Dorsolateral prefrontal cortex (tissue), 120 donors: ENCODE measurements at regions of chr6 and their contacts with region 1.

Region 1: DNA sequence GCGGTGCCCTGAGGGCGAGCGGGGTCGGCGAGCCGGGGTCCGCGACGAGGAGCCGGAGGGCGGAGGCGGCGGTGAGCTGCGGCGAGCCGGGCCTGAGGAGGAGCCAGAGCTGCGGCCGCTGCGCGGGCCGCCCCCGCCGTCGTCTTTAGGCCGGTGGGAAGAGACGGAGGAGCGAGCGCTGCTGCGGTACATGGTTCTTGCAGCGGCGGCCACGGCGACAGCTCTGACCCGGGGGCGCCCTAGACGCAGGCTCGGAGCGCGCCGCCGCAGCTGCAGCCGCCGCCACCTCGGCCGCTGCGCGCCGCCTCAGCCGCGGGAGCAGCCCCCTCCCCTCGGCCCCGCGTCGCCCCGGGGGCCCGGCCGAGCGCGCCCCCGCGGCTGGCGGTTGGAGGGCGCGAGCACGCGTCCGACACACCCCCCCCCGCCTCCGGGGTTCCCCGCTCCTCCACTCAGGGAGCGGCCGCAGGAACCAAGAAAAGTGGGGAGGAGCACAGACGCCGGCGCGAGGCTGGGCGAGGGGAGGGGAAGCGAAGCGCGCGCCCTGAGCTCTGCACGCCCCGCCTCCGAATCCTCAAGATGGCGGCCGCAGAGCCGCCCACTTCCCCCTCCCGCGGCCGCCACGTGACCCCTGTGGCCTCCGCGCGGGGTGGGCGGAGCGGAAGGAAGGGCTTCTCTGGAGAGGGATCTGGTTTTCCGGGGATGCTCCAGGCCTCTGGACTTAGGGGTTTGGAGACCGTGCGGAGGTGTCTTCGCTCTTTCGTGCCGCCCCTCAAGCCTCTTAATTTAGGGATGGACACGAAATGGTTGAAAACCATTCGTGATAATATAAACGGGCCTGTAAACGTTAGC is at the start of gene ZNF318:
- DNase-seq: peak; percentile 91 to 98 (median 96)
- H3K4me3 ChIP-seq: peak within 1 kb of the TSS; percentile 59 to 92 (median 81)
- H3K27ac ChIP-seq: peak within 1 kb of the TSS; percentile 62 to 98 (median 93)
- H3K27me3 ChIP-seq: no peaks in the 10 kb centered on the region
- CTCF ChIP-seq: peak in 17 of 56 donors; percentile 12 to 50 (median 25)
- total RNA-seq, gene ZNF318: 27.9 to 56.2 (median 41.8) TPM

Region 2: GRCh38 chr6:42928986-42929820 is 440.2 kb before region 1 on chr6 and contains the start of gene CNPY3:
- intact Hi-C with region 1: no loop called
- DNase-seq: peak; percentile 79 to 96 (median 94)
- H3K4me3 ChIP-seq: peak within 1 kb of the TSS; percentile 65 to 98 (median 85)
- H3K27ac ChIP-seq: peak within 1 kb of the TSS; percentile 61 to 98 (median 93)
- H3K27me3 ChIP-seq: no peaks in the 10 kb centered on the region
- CTCF ChIP-seq: peak in 19 of 56 donors; percentile 6 to 52 (median 21)
- total RNA-seq, gene CNPY3: 33.3 to 56.8 (median 43.9) TPM

Region 3: DNA sequence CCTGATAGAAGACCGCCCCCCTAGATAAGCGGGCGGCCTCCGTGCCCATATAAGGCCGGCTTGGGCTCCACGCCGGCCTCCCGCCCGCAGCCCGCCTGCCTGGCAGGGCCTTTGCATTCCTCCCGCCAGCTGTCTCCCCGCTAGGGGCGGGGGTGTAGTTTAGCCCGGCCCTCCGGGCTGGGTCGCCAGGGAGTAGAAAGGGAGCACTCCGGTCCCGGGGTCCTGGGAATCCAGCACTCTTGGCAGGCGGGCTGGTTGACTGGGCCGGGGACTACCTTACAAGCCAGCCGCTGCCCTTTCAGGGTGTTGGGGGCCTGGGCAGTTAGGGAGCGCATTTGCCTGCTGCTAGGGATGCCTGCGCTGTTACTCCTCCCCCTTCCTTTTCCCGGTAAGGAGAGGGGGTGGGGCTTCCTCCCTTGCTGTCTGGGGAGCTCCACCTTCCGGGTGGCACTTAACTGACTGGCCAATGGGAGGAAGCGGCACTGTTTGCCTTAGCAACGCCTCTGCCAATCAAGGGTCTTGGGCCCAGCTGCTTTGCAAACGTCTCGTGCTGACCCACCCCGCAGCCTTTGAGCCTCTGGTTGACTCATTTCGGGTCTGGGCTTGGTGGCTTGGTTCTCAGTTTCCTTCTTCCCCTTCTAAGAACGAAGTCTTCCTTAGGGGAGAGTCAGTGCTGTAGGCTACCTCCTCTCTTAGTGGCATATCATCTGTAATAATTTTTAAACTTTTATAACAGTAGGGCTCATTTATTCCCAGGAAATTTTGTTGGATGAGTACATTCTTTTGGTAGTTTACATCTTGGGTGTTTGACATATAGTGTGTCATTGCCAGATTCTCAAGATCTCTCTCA is 194.9 kb before region 1 on chr6:
- intact Hi-C with region 1: loop called (anchors 2 to 5 kb)
- DNase-seq: peak; percentile 88 to 99 (median 98)
- H3K4me3 ChIP-seq: peak overlapping the region; percentile 29 to 98 (median 81)
- H3K27ac ChIP-seq: peak overlapping the region; percentile 50 to 98 (median 90)
- H3K27me3 ChIP-seq: no peaks in the 10 kb centered on the region
- CTCF ChIP-seq: peak in 50 of 56 donors; percentile 8 to 67 (median 42)

Region 4: DNA sequence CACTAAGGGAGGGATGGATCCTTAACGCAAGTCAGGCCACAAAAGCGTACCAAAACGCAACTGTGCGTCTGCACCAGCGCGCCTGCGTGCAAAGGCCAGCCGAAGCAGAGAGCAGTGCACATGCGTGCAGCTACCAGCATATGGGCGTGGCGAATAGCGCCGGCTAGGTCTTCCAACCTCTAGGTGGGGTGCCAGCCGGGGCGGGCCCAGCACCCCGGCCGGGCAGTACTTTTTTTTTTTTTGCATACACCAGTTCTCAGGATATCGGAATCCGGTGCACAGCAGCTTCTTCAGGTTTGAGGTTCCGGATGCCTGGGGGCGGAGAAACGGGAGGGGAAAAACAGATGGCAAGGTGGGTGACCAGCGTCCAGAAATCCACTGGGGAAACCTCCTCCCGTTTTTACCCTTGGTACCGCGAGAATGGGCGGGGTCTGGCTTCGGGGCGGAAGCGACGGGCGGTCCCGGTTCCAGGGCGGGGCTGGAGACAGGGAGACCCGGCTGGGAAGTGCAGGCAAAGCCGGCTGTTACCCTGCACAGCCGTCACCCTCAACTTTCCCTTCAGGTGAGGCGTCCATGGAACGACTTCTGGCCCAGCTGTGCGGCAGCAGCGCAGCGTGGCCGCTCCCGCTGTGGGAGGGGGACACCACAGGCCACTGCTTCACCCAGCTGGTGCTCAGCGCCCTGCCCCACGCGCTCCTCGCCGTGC is 58.2 kb after region 1 on chr6 and contains the start of gene ABCC10:
- intact Hi-C with region 1: loop called (anchors 1 to 2 kb)
- DNase-seq: peak; percentile 85 to 95 (median 94)
- H3K4me3 ChIP-seq: peak within 1 kb of the TSS; percentile 52 to 99 (median 85)
- H3K27ac ChIP-seq: peak within 1 kb of the TSS; percentile 1 to 93 (median 85)
- H3K27me3 ChIP-seq: no peaks in the 10 kb centered on the region
- CTCF ChIP-seq: peak in 54 of 56 donors; percentile 5 to 72 (median 52)
- total RNA-seq, gene ABCC10: 16.3 to 62.8 (median 35.7) TPM

Region 5: DNA sequence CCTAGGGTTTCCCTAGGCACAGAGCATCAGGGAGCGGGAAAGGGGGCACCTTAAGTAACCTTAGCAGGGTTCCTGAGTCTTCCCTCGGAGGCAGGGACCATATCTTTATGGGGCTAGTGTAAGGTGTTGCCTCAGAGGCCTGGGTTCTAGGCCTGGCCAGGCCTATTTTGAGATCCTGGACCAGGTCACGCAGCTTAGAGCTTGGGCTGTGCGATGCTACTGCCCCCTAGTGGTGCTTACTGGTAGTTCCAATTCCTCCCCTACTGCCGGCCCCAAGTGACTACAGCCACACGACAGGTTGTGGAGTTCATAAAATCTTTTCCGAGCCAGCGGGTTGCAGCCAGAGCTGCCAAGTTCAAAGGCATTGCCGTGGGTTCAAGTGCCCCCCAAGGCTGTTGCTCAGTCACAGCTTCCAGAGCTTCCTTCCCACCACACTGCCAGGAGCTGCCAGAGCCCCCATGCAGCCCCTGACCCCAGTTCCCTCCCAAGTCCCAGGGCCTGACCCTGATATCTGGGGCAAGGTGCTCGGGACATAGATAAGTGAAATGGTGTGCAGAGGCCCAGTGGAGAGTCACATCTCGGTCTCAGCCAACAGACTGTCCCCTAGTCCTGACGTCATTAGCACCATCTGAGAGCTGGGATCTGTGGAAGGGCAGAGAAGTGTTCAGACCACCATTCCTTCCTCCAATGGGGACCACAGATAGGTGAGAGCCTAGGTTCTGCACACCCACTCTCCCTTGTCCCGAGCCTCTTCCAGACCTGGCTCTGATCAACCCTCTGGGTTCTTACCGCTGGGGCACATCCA is 137.5 kb after region 1 on chr6:
- intact Hi-C with region 1: loop called in 1 of 2 experiments (anchors 5 kb)
- DNase-seq: peak in 9 of 10 donors; percentile 68 to 85 (median 83)
- H3K4me3 ChIP-seq: peak overlapping the region in 3 of 59 donors; percentile 11 to 16 (median 13)
- H3K27ac ChIP-seq: peak overlapping the region in 51 of 59 donors; percentile 23 to 85 (median 69)
- H3K27me3 ChIP-seq: no peaks in the 10 kb centered on the region
- CTCF ChIP-seq: peak; percentile 85 to 99 (median 96)

Region 6: GRCh38 chr6:43575772-43576551 is 206.6 kb after region 1 on chr6 and contains the starts of genes POLH and XPO5:
- intact Hi-C with region 1: loop called in 1 of 2 experiments (anchors 10 kb)
- DNase-seq: peak; percentile 80 to 93 (median 86)
- H3K4me3 ChIP-seq: peak within 1 kb of the TSS; percentile 67 to 100 (median 93)
- H3K27ac ChIP-seq: peak within 1 kb of the TSS in 54 of 59 donors; percentile 1 to 86 (median 66)
- H3K27me3 ChIP-seq: no peaks in the 10 kb centered on the region
- CTCF ChIP-seq: peak in 39 of 56 donors; percentile 10 to 59 (median 31)
- total RNA-seq, gene POLH: 6.2 to 24.4 (median 11.6) TPM
- total RNA-seq, gene XPO5: 25.5 to 71.5 (median 43.3) TPM